ENCODE measurements at regions of chr1 and their contacts with region 1.

Region 1: DNA sequence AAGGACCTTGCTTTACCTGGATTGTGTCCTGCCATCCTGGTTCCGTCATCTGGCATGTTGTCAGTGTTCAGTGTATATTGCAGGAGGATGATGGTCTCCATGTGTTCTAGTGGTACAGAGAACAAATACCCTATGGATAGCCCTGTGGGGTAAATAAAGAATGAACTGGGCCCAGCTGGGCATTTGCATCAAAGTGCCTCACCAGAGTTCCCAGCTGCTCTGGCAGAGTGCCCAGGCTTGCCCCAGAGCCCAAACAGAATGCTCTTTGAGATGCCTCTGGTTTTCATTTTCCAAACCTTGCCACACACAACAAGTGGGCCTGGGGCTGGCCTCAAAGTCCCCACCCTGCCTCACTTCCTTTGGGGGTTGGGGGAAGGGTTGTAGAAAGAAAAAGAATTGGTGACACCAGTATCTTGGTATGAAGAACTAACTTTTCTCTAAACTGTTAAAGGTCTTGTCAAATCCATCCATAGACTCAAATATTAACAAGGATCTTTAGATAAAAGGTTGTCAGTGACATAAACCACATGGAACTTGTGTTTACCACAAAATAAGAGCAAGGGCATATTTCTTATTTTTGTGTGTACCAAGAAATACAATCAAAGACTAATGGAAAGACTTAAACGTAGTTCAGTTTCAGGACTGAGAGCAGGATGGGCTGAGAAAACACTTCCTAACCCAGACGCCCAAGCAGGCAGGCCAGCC is 82.2 kb downstream of the LMO4 start:
- DNase-seq: no peak
- ATAC-seq: no peak
- H3K4me3 ChIP-seq: no peak overlapping the region
- H3K4me3 Mint-ChIP-seq: no peak overlapping the region
- H3K27ac ChIP-seq: no peak overlapping the region
- H3K27ac Mint-ChIP-seq: no peak overlapping the region
- H3K4me1 ChIP-seq: no peaks in the 10 kb centered on the region
- H3K4me1 Mint-ChIP-seq: peaks cover 0 to 3% (median 0%) of the 10 kb centered on the region in 3 donors
- H3K27me3 ChIP-seq: no peaks in the 10 kb centered on the region
- H3K27me3 Mint-ChIP-seq: no peaks in the 10 kb centered on the region

Region 2: GRCh38 chr1:88787023-88787903 is 1376.3 kb after region 1 on chr1:
- CTCF ChIA-PET with region 1: no interaction called
- POLR2A ChIA-PET with region 1: interaction called in 1 of 2 experiments, 16 read pairs
- DNase-seq: no peak
- ATAC-seq: no peak
- H3K4me3 ChIP-seq: no peak overlapping the region
- H3K4me3 Mint-ChIP-seq: no peak overlapping the region
- H3K27ac ChIP-seq: no peak overlapping the region
- H3K27ac Mint-ChIP-seq: no peak overlapping the region
- H3K4me1 ChIP-seq: no peaks in the 10 kb centered on the region
- H3K4me1 Mint-ChIP-seq: no peaks in the 10 kb centered on the region
- H3K27me3 ChIP-seq: no peaks in the 10 kb centered on the region
- H3K27me3 Mint-ChIP-seq: no peaks in the 10 kb centered on the region